ENCODE measurements at regions of chr2 and their contacts with region 1.

Region 1: DNA sequence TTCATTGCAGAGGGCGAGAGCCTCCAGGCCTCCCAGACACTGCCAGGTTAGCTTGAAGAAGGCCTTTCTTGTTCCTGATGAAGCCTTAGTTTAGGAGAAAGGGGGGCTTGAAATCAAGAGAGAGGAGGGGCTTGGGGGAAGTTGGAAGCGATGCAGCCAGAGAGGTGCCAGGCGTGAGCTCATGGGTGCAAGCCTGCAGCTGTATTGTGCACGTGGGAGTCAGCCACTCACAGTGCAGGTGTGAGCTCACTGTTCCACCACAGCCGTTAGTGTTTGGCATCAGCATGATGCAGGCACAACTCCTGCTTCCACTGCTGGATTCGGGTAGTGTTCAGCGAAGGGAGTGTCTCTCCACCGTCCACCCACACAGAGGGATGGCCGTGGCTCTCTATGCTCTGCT is 68.4 kb upstream of the ALPP start:
- DNase-seq: peak; percentile 53
- ATAC-seq: peak; percentile 61
- H3K4me3 Mint-ChIP-seq: peak overlapping the region; percentile 53
- H3K27ac Mint-ChIP-seq: peak overlapping the region; percentile 85
- H3K4me1 Mint-ChIP-seq: peaks cover 79% of the 10 kb centered on the region
- H3K27me3 Mint-ChIP-seq: no peaks in the 10 kb centered on the region

Region 2: GRCh38 chr2:232321156-232321816 is 11.2 kb after region 1 on chr2:
- CTCF ChIA-PET with region 1: interaction called, 98 read pairs
- POLR2A ChIA-PET with region 1: interaction called, 48 read pairs
- DNase-seq: peak; percentile 87
- ATAC-seq: peak; percentile 84
- H3K4me3 Mint-ChIP-seq: peak overlapping the region; percentile 61
- H3K27ac Mint-ChIP-seq: peak overlapping the region; percentile 86
- H3K4me1 Mint-ChIP-seq: peaks cover 74% of the 10 kb centered on the region
- H3K27me3 Mint-ChIP-seq: no peaks in the 10 kb centered on the region